ENCODE measurements at regions of chr2 and their contacts with region 1.

Region 1: DNA sequence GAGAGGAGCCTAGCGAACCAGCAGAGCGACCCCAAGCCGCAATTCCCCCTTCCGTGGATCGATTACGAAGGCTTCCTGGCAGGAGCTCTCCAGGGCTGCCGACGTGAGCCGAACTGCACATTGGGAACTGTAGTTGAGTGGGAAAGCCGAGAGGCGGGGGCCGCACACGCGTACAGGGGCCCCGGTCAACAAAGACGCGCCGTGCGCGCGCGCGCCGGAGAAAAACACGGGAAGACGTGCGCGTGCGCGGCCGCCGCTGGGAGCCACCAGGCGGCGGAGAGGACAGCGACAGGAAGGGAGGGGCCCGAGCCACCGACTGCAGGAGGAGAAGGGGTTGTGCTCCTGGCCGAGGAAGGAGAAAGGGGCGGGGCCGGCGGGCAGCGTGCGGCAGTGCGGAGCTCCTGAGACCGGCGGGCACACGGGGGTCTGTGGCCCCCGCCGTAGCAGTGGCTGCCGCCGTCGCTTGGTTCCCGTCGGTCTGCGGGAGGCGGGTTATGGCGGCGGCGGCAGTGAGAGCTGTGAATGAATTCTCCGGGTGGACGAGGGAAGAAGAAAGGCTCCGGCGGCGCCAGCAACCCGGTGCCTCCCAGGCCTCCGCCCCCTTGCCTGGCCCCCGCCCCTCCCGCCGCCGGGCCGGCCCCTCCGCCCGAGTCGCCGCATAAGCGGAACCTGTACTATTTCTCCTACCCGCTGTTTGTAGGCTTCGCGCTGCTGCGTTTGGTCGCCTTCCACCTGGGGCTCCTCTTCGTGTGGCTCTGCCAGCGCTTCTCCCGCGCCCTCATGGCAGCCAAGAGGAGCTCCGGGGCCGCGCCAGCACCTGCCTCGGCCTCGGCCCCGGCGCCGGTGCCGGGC is at the start of gene SPAST:
- DNase-seq: peak; percentile 97
- H3K4me3 ChIP-seq: peak within 1 kb of the TSS; percentile 74 to 98 (median 75)
- H3K27ac ChIP-seq: peak within 1 kb of the TSS; percentile 56
- H3K4me1 ChIP-seq: peaks cover 25% of the 10 kb centered on the region
- H3K27me3 ChIP-seq: no peaks in the 10 kb centered on the region
- CTCF ChIP-seq: peak; percentile 4 to 61
- total RNA-seq, gene SPAST: 13.7 to 22.5 TPM

Region 2: GRCh38 chr2:31778153-31778552 is 285.4 kb before region 1 on chr2:
- CTCF ChIA-PET with region 1: no interaction called
- dilution Hi-C with region 1: no loop called
- in situ Hi-C with region 1: no loop called
- intact Hi-C with region 1: no loop called
- DNase-seq: no peak
- H3K4me3 ChIP-seq: no peak overlapping the region
- H3K27ac ChIP-seq: no peak overlapping the region
- H3K4me1 ChIP-seq: no peaks in the 10 kb centered on the region
- H3K27me3 ChIP-seq: no peaks in the 10 kb centered on the region
- CTCF ChIP-seq: no peak

Region 3: GRCh38 chr2:31919499-31919898 is 144.0 kb before region 1 on chr2:
- CTCF ChIA-PET with region 1: no interaction called
- dilution Hi-C with region 1: no loop called
- in situ Hi-C with region 1: no loop called
- intact Hi-C with region 1: loop called (anchors 5 kb)
- DNase-seq: no peak
- H3K4me3 ChIP-seq: no peak overlapping the region
- H3K27ac ChIP-seq: no peak overlapping the region
- H3K4me1 ChIP-seq: no peaks in the 10 kb centered on the region
- H3K27me3 ChIP-seq: no peaks in the 10 kb centered on the region
- CTCF ChIP-seq: no peak

Region 4: DNA sequence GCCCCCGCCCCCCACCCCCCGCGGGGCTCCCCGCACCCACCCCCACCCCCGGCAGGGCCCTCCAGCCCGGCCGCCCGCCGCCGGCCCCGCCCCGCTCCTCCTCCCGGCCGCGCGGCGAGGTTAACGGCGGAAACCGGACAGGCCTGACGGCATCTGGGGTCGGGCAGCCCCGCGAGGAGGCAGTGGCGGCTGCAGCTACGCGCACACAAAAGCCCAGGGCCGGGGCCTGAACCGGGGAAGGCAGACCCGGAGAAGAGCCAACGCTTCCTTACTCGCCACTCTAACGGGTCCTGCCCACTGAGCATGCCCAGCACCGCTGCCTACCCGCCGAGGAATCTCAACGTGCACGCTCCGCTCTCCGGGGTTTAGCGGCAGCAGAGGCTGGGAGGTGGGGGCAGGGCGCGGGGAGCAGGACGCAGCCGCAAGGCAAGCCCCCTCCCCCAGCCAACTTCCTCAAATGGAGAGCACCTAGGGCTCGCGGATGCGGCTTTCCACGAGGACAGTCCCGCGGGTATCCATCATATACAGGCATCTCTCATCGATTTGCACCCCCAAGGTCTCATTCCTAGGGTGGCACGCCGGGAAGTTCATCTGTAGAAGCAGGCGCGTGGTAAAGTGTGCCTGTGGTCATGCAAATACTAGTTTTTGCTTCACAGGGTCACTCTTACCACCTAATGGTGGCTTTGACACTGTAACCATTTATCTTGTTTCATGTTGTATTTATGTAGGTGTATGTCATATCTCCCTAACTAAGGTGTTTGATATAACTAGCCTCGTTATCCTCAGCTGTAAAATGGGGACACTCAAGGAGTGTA is 52.7 kb before region 1 on chr2 and contains the start of gene MEMO1:
- CTCF ChIA-PET with region 1: no interaction called
- dilution Hi-C with region 1: no loop called
- in situ Hi-C with region 1: no loop called
- intact Hi-C with region 1: loop called (anchors 2 kb)
- DNase-seq: peak; percentile 93
- H3K4me3 ChIP-seq: peak within 1 kb of the TSS; percentile 86 to 98 (median 96)
- H3K27ac ChIP-seq: peak within 1 kb of the TSS; percentile 47
- H3K4me1 ChIP-seq: peaks cover 11% of the 10 kb centered on the region
- H3K27me3 ChIP-seq: no peaks in the 10 kb centered on the region
- CTCF ChIP-seq: peak in 1 of 2 donors; percentile 20
- total RNA-seq, gene MEMO1: 47.8 to 75.3 TPM